ENCODE measurements at regions of chr2 and their contacts with region 1.

Region 1: GRCh38 chr2:176096986-176097819 is 2.4 kb upstream of the HOXD12 start:
- DNase-seq: peak; percentile 72
- H3K4me3 ChIP-seq: peak overlapping the region in 1 of 3 experiments; percentile 17
- H3K27ac ChIP-seq: no peak overlapping the region
- H3K4me1 ChIP-seq: peaks cover 5% of the 10 kb centered on the region
- H3K27me3 ChIP-seq: peaks cover 87 to 97% of the 10 kb centered on the region in 2 experiments
- CTCF ChIP-seq: peak; percentile 83 to 93
- POLR2A ChIP-seq: no peak

Region 2: GRCh38 chr2:175203621-175204496 is 893.3 kb before region 1 on chr2:
- CTCF ChIA-PET with region 1: interaction called, 18 read pairs
- POLR2A ChIA-PET with region 1: no interaction called
- dilution Hi-C with region 1: no loop called
- intact Hi-C with region 1: no loop called
- DNase-seq: peak; percentile 54
- H3K4me3 ChIP-seq: no peak overlapping the region
- H3K27ac ChIP-seq: no peak overlapping the region
- H3K4me1 ChIP-seq: no peaks in the 10 kb centered on the region
- H3K27me3 ChIP-seq: peaks cover 0 to 13% of the 10 kb centered on the region in 2 experiments
- CTCF ChIP-seq: peak; percentile 39 to 54
- POLR2A ChIP-seq: no peak

Region 3: GRCh38 chr2:175326801-175327200 is 770.4 kb before region 1 on chr2:
- CTCF ChIA-PET with region 1: no interaction called
- POLR2A ChIA-PET with region 1: no interaction called
- dilution Hi-C with region 1: no loop called
- intact Hi-C with region 1: loop called (anchors 1 kb)
- DNase-seq: no peak
- H3K4me3 ChIP-seq: no peak overlapping the region
- H3K27ac ChIP-seq: no peak overlapping the region
- H3K4me1 ChIP-seq: no peaks in the 10 kb centered on the region
- H3K27me3 ChIP-seq: no peaks in the 10 kb centered on the region
- CTCF ChIP-seq: no peak
- POLR2A ChIP-seq: no peak

Region 4: GRCh38 chr2:175414882-175415487 is 682.2 kb before region 1 on chr2:
- CTCF ChIA-PET with region 1: interaction called, 5 read pairs
- POLR2A ChIA-PET with region 1: no interaction called
- dilution Hi-C with region 1: no loop called
- intact Hi-C with region 1: loop called (anchors 1 kb)
- DNase-seq: peak; percentile 57
- H3K4me3 ChIP-seq: no peak overlapping the region
- H3K27ac ChIP-seq: no peak overlapping the region
- H3K4me1 ChIP-seq: no peaks in the 10 kb centered on the region
- H3K27me3 ChIP-seq: no peaks in the 10 kb centered on the region
- CTCF ChIP-seq: peak; percentile 44 to 63
- POLR2A ChIP-seq: no peak

Region 5: GRCh38 chr2:175904035-175904434 is 193.2 kb before region 1 on chr2:
- CTCF ChIA-PET with region 1: no interaction called
- POLR2A ChIA-PET with region 1: no interaction called
- dilution Hi-C with region 1: no loop called
- intact Hi-C with region 1: no loop called
- DNase-seq: no peak
- H3K4me3 ChIP-seq: no peak overlapping the region
- H3K27ac ChIP-seq: no peak overlapping the region
- H3K4me1 ChIP-seq: no peaks in the 10 kb centered on the region
- H3K27me3 ChIP-seq: no peaks in the 10 kb centered on the region
- CTCF ChIP-seq: no peak
- POLR2A ChIP-seq: no peak

Region 6: GRCh38 chr2:176079831-176080539 is 17.2 kb before region 1 on chr2:
- CTCF ChIA-PET with region 1: interaction called, 15 read pairs
- POLR2A ChIA-PET with region 1: no interaction called
- dilution Hi-C with region 1: no loop called
- intact Hi-C with region 1: loop called (anchors 2 kb)
- DNase-seq: no peak
- H3K4me3 ChIP-seq: no peak overlapping the region
- H3K27ac ChIP-seq: no peak overlapping the region
- H3K4me1 ChIP-seq: no peaks in the 10 kb centered on the region
- H3K27me3 ChIP-seq: peaks cover 80 to 97% of the 10 kb centered on the region in 2 experiments
- CTCF ChIP-seq: peak; percentile 81 to 82
- POLR2A ChIP-seq: no peak